Panc1 (cell line): ENCODE measurements at regions of chr1 and their contacts with region 1.

Region 1: DNA sequence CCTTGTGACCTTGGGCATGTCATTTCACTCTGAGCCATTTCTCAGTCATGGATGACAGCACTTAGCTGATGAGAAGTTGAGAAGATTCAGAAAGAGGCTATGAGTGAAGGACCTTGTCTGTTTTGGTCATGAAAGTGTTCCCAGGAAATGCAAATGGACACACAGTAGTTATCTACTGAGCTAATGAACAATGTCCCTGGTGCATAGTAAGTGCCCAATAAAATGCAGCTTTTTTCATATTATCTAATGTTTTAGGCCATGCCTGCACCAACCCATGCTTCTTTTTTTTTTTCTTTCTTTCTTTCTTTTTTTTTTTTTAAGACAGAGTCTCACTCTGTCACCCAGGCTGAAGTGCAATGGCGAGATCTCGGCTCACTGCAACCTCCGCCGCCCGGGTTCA is 44.4 kb upstream of the EPB41 start:
- DNase-seq: no peak
- ATAC-seq: no peak
- H3K4me3 ChIP-seq: no peak overlapping the region
- H3K27ac ChIP-seq: no peak overlapping the region
- H3K4me1 ChIP-seq: no peaks in the 10 kb centered on the region
- H3K27me3 ChIP-seq: no peaks in the 10 kb centered on the region
- CTCF ChIP-seq: no peak

Region 2: DNA sequence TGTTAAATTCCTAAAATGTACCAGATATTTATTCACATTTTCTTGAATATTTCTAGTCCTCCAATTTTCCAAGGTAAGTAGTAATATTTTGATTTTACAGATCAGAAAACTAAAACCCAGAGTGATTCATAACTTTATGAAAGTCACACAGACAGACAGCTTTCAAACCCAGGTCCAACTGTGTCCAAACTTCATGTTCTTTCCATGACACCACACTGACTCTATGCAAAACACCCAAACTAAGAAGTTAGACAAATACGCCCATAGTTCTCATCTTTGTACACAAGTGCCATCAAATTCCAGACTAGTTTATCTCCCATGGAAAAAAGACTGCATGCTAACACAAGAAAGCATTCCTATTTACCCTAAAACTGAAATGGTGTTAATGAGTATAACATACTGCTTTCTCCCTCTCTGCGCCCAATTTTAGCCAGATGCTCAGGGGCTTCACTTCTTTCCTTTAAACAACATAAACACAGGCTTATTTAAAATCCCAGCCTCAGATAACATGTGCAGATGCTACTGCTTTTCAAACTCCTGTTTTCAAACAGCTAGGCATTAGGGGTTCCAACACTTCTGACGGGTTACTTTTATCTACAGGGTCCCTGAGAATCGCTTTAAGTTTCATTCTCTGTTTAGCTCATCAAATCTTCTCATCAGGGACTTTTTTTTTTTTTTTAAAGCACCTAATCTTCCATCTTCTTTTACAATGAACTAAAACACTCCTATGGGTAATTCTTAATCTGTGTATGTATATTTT is 1424.6 kb before region 1 on chr1:
- CTCF ChIA-PET with region 1: no interaction called
- POLR2A ChIA-PET with region 1: interaction called, 10 read pairs
- in situ Hi-C with region 1: no loop called
- intact Hi-C with region 1: no loop called
- DNase-seq: no peak
- ATAC-seq: no peak
- H3K4me3 ChIP-seq: no peak overlapping the region
- H3K27ac ChIP-seq: no peak overlapping the region
- H3K4me1 ChIP-seq: 0 out of 2 replicates have a peak, but pooled peaks cover 3% of the 10 kb centered on the region
- H3K27me3 ChIP-seq: no peaks in the 10 kb centered on the region
- CTCF ChIP-seq: no peak